Activated CD8-positive, alpha-beta memory T cell treated with anti-CD3 and anti-CD28 coated beads, Interleukin-2, amount 10 ng/mL, durations not matched to agents 7 days and 5 days (primary cell): ENCODE measurements at regions of chr22 and their contacts with region 1.

Region 1: GRCh38 chr22:39943337-39943736 is 16.9 kb upstream of the TMA7B start:
- DNase-seq: peak; percentile 62
- ATAC-seq: peak; percentile 17
- H3K4me3 Mint-ChIP-seq: peak overlapping the region; percentile 43
- H3K27ac Mint-ChIP-seq: peak overlapping the region; percentile 88
- H3K4me1 Mint-ChIP-seq: peaks cover 88% of the 10 kb centered on the region
- H3K27me3 Mint-ChIP-seq: no peaks in the 10 kb centered on the region

Region 2: GRCh38 chr22:39917776-39918495 is 25.4 kb before region 1 on chr22:
- CTCF ChIA-PET with region 1: interaction called, 12 read pairs
- DNase-seq: no peak
- ATAC-seq: no peak
- H3K4me3 Mint-ChIP-seq: peak overlapping the region; percentile 90
- H3K27ac Mint-ChIP-seq: peak overlapping the region; percentile 94
- H3K4me1 Mint-ChIP-seq: peaks cover 84% of the 10 kb centered on the region
- H3K27me3 Mint-ChIP-seq: no peaks in the 10 kb centered on the region

Region 3: DNA sequence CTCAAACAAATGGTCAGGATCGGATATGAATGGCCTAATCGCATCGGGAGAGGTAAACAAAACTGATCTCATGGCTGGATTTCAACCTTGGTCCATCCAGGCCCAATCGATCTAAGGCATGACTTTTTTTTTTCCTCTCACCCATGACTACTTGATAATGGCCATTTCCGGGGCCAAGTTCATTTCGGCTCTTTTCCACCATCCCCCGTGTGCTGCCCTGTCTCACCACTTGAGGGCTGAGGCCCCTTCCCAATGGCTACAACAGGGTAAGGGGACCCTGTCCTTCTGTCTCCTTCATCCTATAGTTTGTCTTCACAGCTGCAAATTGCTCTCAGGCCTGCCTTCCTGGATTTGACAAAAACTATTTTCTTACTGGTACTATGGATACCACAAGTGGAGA is 15.8 kb before region 1 on chr22:
- CTCF ChIA-PET with region 1: interaction called, 28 read pairs
- DNase-seq: peak; percentile 69
- ATAC-seq: peak; percentile 33
- H3K4me3 Mint-ChIP-seq: no peak overlapping the region
- H3K27ac Mint-ChIP-seq: no peak overlapping the region
- H3K4me1 Mint-ChIP-seq: peaks cover 37% of the 10 kb centered on the region
- H3K27me3 Mint-ChIP-seq: no peaks in the 10 kb centered on the region